ENCODE measurements at regions of chr3 and their contacts with region 1.

Region 1: GRCh38 chr3:172536993-172537419 is 13.8 kb upstream of the TNFSF10 start:
- DNase-seq: no peak
- ATAC-seq: peak; percentile 40
- H3K4me3 ChIP-seq: no peak overlapping the region
- H3K27ac ChIP-seq: no peak overlapping the region
- H3K4me1 ChIP-seq: peaks cover 5% of the 10 kb centered on the region
- H3K27me3 ChIP-seq: no peaks in the 10 kb centered on the region
- CTCF ChIP-seq: no peak
- POLR2A ChIP-seq: no peak
- RAD21 ChIP-seq: no peak

Region 2: DNA sequence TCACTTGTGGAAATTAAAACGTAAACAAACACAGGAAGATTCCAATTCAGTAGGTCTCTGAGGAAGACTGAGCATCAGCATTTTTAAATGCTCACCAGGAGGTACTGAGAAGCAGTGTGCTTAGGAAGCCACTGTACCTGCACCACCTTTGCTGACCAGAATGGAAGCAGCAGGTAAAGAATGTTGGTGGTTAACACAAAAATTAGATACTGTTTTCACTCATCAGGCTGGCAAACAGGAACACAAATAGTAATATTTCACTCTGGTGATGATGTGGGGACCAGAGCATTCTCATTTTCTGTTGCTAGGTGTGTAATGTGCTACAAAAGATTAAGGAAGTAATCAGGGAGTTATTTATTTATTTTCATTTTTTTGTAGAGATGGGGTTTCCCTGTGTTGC is 58.9 kb before region 1 on chr3:
- CTCF ChIA-PET with region 1: no interaction called
- POLR2A ChIA-PET with region 1: no interaction called
- dilution Hi-C with region 1: no loop called
- in situ Hi-C with region 1: no loop called
- intact Hi-C with region 1: no loop called
- DNase-seq: no peak
- ATAC-seq: no peak
- H3K4me3 ChIP-seq: no peak overlapping the region
- H3K27ac ChIP-seq: no peak overlapping the region
- H3K4me1 ChIP-seq: no peaks in the 10 kb centered on the region; the same call in 1 of the 2 replicates
- H3K27me3 ChIP-seq: no peaks in the 10 kb centered on the region; the same call in none of the 2 replicates
- CTCF ChIP-seq: no peak
- POLR2A ChIP-seq: no peak
- RAD21 ChIP-seq: no peak

Region 3: GRCh38 chr3:172569128-172570008 is 32.4 kb after region 1 on chr3:
- CTCF ChIA-PET with region 1: interaction called, 10 read pairs
- POLR2A ChIA-PET with region 1: no interaction called
- dilution Hi-C with region 1: no loop called
- in situ Hi-C with region 1: no loop called
- intact Hi-C with region 1: no loop called
- DNase-seq: no peak
- ATAC-seq: no peak
- H3K4me3 ChIP-seq: no peak overlapping the region
- H3K27ac ChIP-seq: no peak overlapping the region
- H3K4me1 ChIP-seq: peaks cover 2% of the 10 kb centered on the region; the same call in 1 of the 2 replicates
- H3K27me3 ChIP-seq: no peaks in the 10 kb centered on the region; the same call in 1 of the 2 replicates
- CTCF ChIP-seq: no peak
- POLR2A ChIP-seq: no peak
- RAD21 ChIP-seq: no peak

Measured in IMR-90 (cell line).